MCF 10A (cell line): ENCODE measurements at regions of chr1 and their contacts with region 1.

Region 1: DNA sequence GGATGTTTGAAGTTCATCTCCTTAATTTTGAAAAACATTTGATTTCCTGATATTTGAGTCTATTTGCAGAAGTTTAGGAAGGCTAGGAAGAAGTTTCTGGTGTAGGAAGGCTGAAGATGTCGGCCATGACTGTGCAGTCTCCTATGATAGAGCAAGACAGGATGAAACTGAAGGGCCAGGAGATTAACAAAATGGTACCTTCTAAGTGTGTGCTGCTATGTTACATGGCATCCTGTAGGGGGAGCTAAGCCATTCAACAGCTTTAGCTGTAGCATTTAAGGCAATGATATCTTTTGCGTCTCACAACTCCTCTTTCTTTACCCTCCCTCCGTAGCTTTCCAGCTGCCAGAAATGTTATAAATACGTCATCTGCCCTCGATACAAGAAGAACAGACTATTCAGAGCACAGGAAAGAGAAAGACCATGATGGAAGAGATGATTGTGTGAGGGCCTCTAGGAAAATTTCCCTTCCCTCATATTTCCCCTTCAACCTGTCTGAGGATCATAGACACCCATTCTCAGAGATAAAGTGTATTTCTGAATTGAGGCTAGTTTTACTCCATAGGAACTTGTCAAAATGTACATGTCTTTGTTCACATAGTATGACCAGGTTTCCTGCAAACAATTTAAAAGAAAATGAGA is 61.1 kb downstream of the XCL1 start:
- DNase-seq: peak; percentile 64
- H3K4me3 Mint-ChIP-seq: peak overlapping the region; percentile 38
- H3K27ac Mint-ChIP-seq: peak overlapping the region; percentile 84
- H3K4me1 Mint-ChIP-seq: peaks cover 25% of the 10 kb centered on the region
- H3K27me3 Mint-ChIP-seq: no peaks in the 10 kb centered on the region
- CTCF ChIP-seq: peak; percentile 86

Region 2: DNA sequence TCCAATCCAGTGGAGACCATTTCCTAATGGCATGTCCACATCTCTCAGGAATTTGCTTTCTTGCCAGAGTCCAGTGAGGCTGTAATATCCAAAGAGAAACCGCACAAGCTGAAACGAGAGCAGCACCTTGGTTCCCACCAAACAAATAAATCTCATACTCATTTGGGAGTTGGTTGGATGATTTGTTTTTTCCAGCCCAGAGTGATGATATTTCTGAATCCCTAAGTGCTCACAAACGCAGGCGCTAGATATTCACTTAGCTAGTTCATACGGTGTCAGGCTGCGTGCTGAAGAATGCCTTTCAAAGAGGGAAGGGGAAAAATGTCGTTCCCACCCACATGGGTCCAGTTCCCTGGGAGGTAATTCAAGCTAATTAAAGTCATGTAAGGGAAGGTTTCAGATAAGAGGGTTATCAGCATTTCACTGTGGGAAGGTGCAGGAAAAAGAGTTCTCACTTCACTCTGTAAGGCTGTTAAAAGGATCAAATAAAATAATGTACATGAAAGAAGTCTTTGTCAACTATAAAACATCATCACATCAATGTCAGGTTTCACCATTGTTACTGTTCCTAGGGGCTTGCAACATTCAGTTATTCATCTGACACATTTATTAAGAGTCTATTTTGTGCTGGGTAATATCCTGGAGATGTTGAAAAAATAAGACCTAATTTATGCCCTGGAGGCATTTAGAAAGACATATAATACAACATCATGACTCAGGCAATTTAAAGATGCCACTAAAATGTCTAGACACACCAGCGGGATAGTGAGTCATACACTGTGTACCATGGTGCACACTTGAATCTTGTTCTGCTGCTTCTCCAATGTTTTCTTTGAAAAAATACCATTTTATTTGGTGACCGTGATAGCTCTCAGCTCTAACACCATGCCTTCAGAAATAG is 72.2 kb after region 1 on chr1:
- CTCF ChIA-PET with region 1: interaction called, 13 read pairs
- POLR2A ChIA-PET with region 1: interaction called, 12 read pairs
- intact Hi-C with region 1: loop called (anchors 2 kb)
- DNase-seq: peak; percentile 97
- H3K4me3 Mint-ChIP-seq: peak overlapping the region; percentile 1
- H3K27ac Mint-ChIP-seq: peak overlapping the region; percentile 80
- H3K4me1 Mint-ChIP-seq: peaks cover 33% of the 10 kb centered on the region
- H3K27me3 Mint-ChIP-seq: no peaks in the 10 kb centered on the region
- CTCF ChIP-seq: no peak

Region 3: GRCh38 chr1:168789501-168789900 is 152.0 kb after region 1 on chr1:
- CTCF ChIA-PET with region 1: interaction called, 5 read pairs
- POLR2A ChIA-PET with region 1: interaction called, 3 read pairs
- intact Hi-C with region 1: loop called (anchors 1 kb)
- DNase-seq: no peak
- H3K4me3 Mint-ChIP-seq: no peak overlapping the region
- H3K27ac Mint-ChIP-seq: no peak overlapping the region
- H3K4me1 Mint-ChIP-seq: no peaks in the 10 kb centered on the region
- H3K27me3 Mint-ChIP-seq: no peaks in the 10 kb centered on the region
- CTCF ChIP-seq: no peak

Region 4: GRCh38 chr1:169106095-169106920 is 468.8 kb after region 1 on chr1 and contains the start of gene ATP1B1:
- CTCF ChIA-PET with region 1: interaction called, 135 read pairs
- POLR2A ChIA-PET with region 1: interaction called, 96 read pairs
- intact Hi-C with region 1: loop called (anchors 1 kb)
- DNase-seq: peak; percentile 92
- H3K4me3 Mint-ChIP-seq: peak within 1 kb of the TSS; percentile 80
- H3K27ac Mint-ChIP-seq: peak within 1 kb of the TSS; percentile 96
- H3K4me1 Mint-ChIP-seq: peaks cover 49% of the 10 kb centered on the region
- H3K27me3 Mint-ChIP-seq: no peaks in the 10 kb centered on the region
- CTCF ChIP-seq: peak; percentile 60
- total RNA-seq, gene ATP1B1: 20.0 and 24.4 TPM in 2 replicates

Region 5: GRCh38 chr1:169180171-169180570 is 542.7 kb after region 1 on chr1:
- CTCF ChIA-PET with region 1: no interaction called
- POLR2A ChIA-PET with region 1: no interaction called
- intact Hi-C with region 1: no loop called
- DNase-seq: no peak
- H3K4me3 Mint-ChIP-seq: no peak overlapping the region
- H3K27ac Mint-ChIP-seq: no peak overlapping the region
- H3K4me1 Mint-ChIP-seq: no peaks in the 10 kb centered on the region
- H3K27me3 Mint-ChIP-seq: no peaks in the 10 kb centered on the region
- CTCF ChIP-seq: no peak

Region 6: GRCh38 chr1:169348383-169349036 is 711.0 kb after region 1 on chr1:
- CTCF ChIA-PET with region 1: interaction called, 79 read pairs
- POLR2A ChIA-PET with region 1: interaction called, 14 read pairs
- intact Hi-C with region 1: loop called (anchors 1 kb)
- DNase-seq: peak; percentile 77
- H3K4me3 Mint-ChIP-seq: no peak overlapping the region
- H3K27ac Mint-ChIP-seq: no peak overlapping the region
- H3K4me1 Mint-ChIP-seq: no peaks in the 10 kb centered on the region
- H3K27me3 Mint-ChIP-seq: no peaks in the 10 kb centered on the region
- CTCF ChIP-seq: peak; percentile 84

Region 7: DNA sequence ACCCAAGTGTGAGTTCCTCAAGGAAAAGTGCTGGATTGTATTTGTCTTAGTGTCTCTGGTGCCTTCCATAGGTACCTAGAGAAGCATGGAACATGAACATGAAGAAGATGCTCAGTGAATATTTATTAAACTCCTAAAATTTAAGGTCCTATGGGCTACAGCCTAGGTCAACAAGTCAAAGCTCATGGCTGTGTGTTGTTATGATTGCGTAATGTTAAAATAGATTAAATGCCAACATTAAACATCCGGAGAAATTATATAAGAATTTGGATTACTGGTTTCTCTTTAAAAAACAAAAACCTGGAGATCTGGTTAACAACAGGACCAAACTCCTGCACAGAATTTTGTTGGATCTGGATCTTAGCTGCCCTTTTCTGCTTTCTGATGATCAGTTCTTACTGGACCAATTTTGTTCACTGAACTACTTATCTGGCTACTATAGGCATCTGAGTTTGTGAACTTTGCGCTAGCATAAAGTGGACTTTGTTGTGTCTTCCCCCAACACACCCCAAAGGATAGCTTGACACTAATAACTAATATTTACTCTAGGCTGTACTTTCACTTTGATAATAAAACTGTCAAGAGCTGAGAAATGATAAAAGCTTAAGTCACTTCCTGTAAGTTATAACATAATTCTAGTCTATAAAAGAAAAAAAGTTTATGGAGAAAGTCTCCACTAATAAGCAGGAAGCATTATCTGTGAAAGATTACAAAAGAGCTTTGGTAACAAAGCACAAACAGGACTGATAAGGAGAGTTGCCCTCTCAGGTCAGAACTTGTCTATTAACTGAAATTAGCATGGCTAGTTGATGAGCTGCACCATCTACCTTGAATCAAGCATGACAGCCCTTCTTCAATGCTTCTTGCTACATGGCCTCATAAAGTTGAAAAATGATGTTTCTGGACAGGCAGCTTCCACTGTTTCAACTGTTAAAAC is 928.1 kb after region 1 on chr1:
- CTCF ChIA-PET with region 1: no interaction called
- POLR2A ChIA-PET with region 1: no interaction called
- intact Hi-C with region 1: no loop called
- DNase-seq: no peak
- H3K4me3 Mint-ChIP-seq: no peak overlapping the region
- H3K27ac Mint-ChIP-seq: no peak overlapping the region
- H3K4me1 Mint-ChIP-seq: no peaks in the 10 kb centered on the region
- H3K27me3 Mint-ChIP-seq: peaks cover 42% of the 10 kb centered on the region
- CTCF ChIP-seq: no peak